ENCODE measurements at regions of chr14 and their contacts with region 1.

Region 1: GRCh38 chr14:39015360-39015961 is 87.6 kb downstream of the SEC23A start:
- DNase-seq: peak; percentile 76
- H3K4me3 ChIP-seq: no peak overlapping the region
- H3K27ac ChIP-seq: no peak overlapping the region
- H3K4me1 ChIP-seq: no peaks in the 10 kb centered on the region
- H3K27me3 ChIP-seq: no peaks in the 10 kb centered on the region
- CTCF ChIP-seq: peak; percentile 64 to 72
- POLR2A ChIP-seq: no peak

Region 2: GRCh38 chr14:37985826-37986470 is 1029.5 kb before region 1 on chr14:
- CTCF ChIA-PET with region 1: interaction called, 5 read pairs
- POLR2A ChIA-PET with region 1: no interaction called
- dilution Hi-C with region 1: no loop called
- intact Hi-C with region 1: loop called (anchors 5 kb)
- DNase-seq: peak; percentile 67
- H3K4me3 ChIP-seq: no peak overlapping the region
- H3K27ac ChIP-seq: no peak overlapping the region
- H3K4me1 ChIP-seq: no peaks in the 10 kb centered on the region
- H3K27me3 ChIP-seq: no peaks in the 10 kb centered on the region
- CTCF ChIP-seq: peak; percentile 63 to 83
- POLR2A ChIP-seq: no peak

Region 3: GRCh38 chr14:38342803-38343202 is 672.7 kb before region 1 on chr14:
- CTCF ChIA-PET with region 1: no interaction called
- POLR2A ChIA-PET with region 1: no interaction called
- dilution Hi-C with region 1: no loop called
- intact Hi-C with region 1: no loop called
- DNase-seq: no peak
- H3K4me3 ChIP-seq: no peak overlapping the region
- H3K27ac ChIP-seq: no peak overlapping the region
- H3K4me1 ChIP-seq: no peaks in the 10 kb centered on the region
- H3K27me3 ChIP-seq: no peaks in the 10 kb centered on the region
- CTCF ChIP-seq: no peak
- POLR2A ChIP-seq: no peak

Region 4: DNA sequence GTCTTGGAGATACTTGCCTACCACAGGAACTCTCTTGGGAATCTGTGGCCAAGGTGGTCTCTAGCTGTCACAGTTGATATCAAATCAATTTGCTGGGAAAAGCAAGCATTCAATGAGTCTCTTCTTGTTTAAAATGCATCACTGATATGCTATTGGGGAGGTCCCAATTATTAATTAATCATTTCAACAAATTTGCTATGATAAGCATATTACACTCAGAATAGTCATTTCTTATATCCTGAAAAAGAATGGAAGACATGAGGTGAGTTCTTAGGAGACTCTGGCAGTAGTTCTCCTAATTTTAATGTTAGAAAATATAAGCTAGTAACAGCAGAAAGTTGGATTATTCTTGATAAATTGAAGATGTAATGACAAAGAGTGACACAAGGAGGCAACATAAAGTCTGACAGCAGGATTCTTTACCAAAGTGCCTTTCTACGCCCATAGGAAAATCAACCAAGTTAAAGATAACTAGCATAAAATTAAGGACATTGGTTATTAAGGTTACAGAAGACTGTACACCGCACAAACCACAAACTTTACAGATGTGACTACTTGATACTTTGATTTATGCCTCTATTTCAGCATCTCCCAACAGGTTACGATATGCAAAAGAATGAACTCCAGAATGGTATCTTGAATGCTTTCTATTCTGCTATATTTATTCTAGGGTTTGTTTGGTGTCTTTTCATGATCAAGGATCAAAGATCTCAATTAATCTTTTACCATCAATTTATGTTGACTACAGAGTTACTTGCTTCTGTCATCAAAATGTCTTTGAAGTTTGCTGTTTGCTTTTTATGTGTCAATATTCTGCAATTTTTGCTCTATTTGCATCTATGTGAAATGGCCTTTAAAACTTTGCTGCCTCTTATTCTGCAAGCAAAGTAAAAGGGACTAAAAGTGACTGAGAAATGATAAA is 410.0 kb before region 1 on chr14:
- CTCF ChIA-PET with region 1: interaction called, 47 read pairs
- POLR2A ChIA-PET with region 1: no interaction called
- dilution Hi-C with region 1: no loop called
- intact Hi-C with region 1: loop called (anchors 1 kb)
- DNase-seq: peak; percentile 32
- H3K4me3 ChIP-seq: no peak overlapping the region
- H3K27ac ChIP-seq: no peak overlapping the region
- H3K4me1 ChIP-seq: no peaks in the 10 kb centered on the region
- H3K27me3 ChIP-seq: no peaks in the 10 kb centered on the region
- CTCF ChIP-seq: peak; percentile 7 to 22
- POLR2A ChIP-seq: no peak

Region 5: DNA sequence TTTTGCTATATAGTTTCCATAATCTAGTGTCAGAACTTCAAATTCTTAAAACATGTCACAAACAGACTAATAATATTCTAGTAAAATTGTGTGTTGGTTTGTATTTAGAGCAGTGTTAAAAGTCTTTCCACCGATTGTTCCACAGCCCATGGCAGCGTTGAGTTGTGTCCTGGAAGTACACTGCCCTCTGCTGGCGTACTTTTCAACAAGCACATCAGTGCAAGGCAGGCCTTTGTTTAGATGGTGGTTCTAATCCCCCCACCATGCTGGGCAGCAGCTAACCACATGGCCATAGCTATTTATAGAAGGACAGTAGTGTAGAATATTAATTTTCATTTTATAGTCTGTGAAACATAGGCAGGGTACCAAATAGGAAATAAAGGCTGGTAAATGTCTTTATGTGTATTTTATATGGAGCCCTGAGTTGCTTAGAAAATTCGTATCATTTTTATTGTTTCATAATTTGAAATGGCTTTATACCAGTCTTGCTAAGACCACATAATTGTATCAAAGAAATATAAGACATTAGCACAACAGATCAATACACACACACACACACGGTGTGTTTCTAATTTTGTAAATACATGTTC is 147.8 kb before region 1 on chr14:
- CTCF ChIA-PET with region 1: interaction called, 95 read pairs
- POLR2A ChIA-PET with region 1: no interaction called
- dilution Hi-C with region 1: no loop called
- intact Hi-C with region 1: loop called (anchors 1 kb)
- DNase-seq: peak; percentile 86
- H3K4me3 ChIP-seq: no peak overlapping the region
- H3K27ac ChIP-seq: no peak overlapping the region
- H3K4me1 ChIP-seq: peaks cover 5% of the 10 kb centered on the region
- H3K27me3 ChIP-seq: no peaks in the 10 kb centered on the region
- CTCF ChIP-seq: peak; percentile 75 to 88
- POLR2A ChIP-seq: no peak

Region 6: GRCh38 chr14:38941485-38941884 is 74.0 kb before region 1 on chr14:
- CTCF ChIA-PET with region 1: interaction called, 9 read pairs
- POLR2A ChIA-PET with region 1: no interaction called
- dilution Hi-C with region 1: no loop called
- intact Hi-C with region 1: loop called (anchors 5 kb)
- DNase-seq: no peak
- H3K4me3 ChIP-seq: no peak overlapping the region
- H3K27ac ChIP-seq: no peak overlapping the region
- H3K4me1 ChIP-seq: no peaks in the 10 kb centered on the region
- H3K27me3 ChIP-seq: no peaks in the 10 kb centered on the region
- CTCF ChIP-seq: no peak
- POLR2A ChIP-seq: no peak

Region 7: GRCh38 chr14:39025810-39026627 is 10.6 kb after region 1 on chr14:
- CTCF ChIA-PET with region 1: interaction called, 18 read pairs
- POLR2A ChIA-PET with region 1: no interaction called
- dilution Hi-C with region 1: no loop called
- intact Hi-C with region 1: no loop called
- DNase-seq: peak; percentile 76
- H3K4me3 ChIP-seq: no peak overlapping the region
- H3K27ac ChIP-seq: no peak overlapping the region
- H3K4me1 ChIP-seq: no peaks in the 10 kb centered on the region
- H3K27me3 ChIP-seq: no peaks in the 10 kb centered on the region
- CTCF ChIP-seq: no peak
- POLR2A ChIP-seq: no peak

Region 8: DNA sequence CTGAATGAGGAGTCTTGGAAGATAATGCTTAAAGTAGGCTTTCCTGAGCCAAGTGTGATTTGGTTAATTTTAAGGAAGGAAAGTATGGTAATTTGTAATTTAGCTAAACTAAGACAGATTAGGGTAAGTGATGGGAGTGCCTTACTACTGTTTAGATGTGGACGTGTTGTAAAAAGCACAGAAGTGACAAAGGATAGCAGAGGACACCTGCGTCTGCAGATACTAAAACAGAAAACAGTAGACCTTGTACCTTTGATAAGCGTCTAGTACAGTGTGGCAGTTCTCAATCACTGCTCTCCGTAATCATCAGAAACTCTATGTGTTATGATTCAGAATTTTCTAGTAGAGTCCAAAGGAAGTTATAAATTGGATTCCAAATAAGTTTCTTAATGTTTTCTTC is 276.2 kb after region 1 on chr14:
- CTCF ChIA-PET with region 1: no interaction called
- POLR2A ChIA-PET with region 1: no interaction called
- dilution Hi-C with region 1: no loop called
- intact Hi-C with region 1: no loop called
- DNase-seq: no peak
- H3K4me3 ChIP-seq: no peak overlapping the region
- H3K27ac ChIP-seq: no peak overlapping the region
- H3K4me1 ChIP-seq: no peaks in the 10 kb centered on the region
- H3K27me3 ChIP-seq: no peaks in the 10 kb centered on the region
- CTCF ChIP-seq: no peak
- POLR2A ChIP-seq: no peak

Measured in endothelial cell of umbilical vein (primary cell).